Activated B cell treated with CpG ODN at 0.5 μM for 24 hours (primary cell): ENCODE measurements at regions of chr13 and their contacts with region 1.

Region 1: GRCh38 chr13:50801087-50801931 is 42.2 kb downstream of the DLEU7 start:
- DNase-seq: peak; percentile 39
- ATAC-seq: peak; percentile 74
- H3K4me3 Mint-ChIP-seq: peak overlapping the region; percentile 64
- H3K27ac Mint-ChIP-seq: peak overlapping the region; percentile 95
- H3K4me1 Mint-ChIP-seq: peaks cover 40% of the 10 kb centered on the region
- H3K27me3 Mint-ChIP-seq: no peaks in the 10 kb centered on the region
- CTCF ChIP-seq: no peak

Region 2: DNA sequence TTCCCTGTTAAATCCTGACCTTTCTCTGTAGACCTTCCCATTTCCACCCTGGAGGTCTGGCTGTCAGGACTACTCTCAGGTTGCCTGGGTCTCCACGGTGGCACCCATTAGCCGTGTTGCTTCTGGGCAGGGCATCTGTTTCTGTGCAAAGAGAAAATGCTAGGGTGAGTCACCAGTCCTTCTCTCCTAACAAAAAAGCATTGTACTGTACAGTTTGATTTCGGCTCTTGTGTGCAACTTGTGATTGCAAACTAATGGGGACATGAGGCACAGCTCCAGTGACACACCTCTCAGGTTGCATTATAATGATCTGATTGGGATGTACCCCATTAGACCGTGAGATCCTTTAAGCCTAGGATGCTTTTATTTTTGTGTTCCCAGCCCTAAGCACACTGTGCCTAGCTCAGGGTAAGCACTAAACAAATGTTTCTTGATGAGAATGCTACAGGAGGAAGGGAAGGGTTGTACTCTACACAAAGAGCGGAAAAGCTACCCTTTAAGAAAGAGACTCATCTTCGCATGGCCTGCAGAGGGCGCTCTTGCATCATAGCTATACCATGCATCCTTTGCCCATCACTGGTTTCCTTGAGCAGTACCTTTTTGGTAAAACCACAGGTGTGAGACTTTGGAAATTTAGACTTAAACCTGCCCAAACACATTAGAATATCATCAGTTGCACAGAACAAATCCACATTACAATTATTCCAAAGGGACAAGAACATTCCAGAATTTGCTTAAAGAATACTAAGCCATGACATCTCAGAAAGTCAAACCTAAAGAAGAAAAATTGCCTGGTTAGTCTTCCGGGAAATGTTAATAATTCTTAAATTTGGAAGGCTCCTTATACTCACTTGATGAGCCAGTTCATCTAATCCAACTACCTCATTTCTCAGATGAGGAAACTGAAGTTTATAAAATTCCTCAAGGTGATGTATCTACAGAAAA is 824.7 kb before region 1 on chr13:
- CTCF ChIA-PET with region 1: interaction called, 34 read pairs
- POLR2A ChIA-PET with region 1: interaction called, 15 read pairs
- intact Hi-C with region 1: loop called (anchors 1 kb)
- DNase-seq: peak; percentile 57
- ATAC-seq: peak; percentile 86
- H3K4me3 Mint-ChIP-seq: no peak overlapping the region
- H3K27ac Mint-ChIP-seq: no peak overlapping the region
- H3K4me1 Mint-ChIP-seq: peaks cover 2% of the 10 kb centered on the region
- H3K27me3 Mint-ChIP-seq: no peaks in the 10 kb centered on the region
- CTCF ChIP-seq: no peak

Region 3: GRCh38 chr13:50236898-50237318 is 564.4 kb before region 1 on chr13:
- CTCF ChIA-PET with region 1: interaction called, 5 read pairs
- POLR2A ChIA-PET with region 1: interaction called, 13 read pairs
- intact Hi-C with region 1: loop called (anchors 1 kb)
- DNase-seq: no peak
- ATAC-seq: peak; percentile 90
- H3K4me3 Mint-ChIP-seq: peak overlapping the region; percentile 55
- H3K27ac Mint-ChIP-seq: peak overlapping the region; percentile 92
- H3K4me1 Mint-ChIP-seq: peaks cover 53% of the 10 kb centered on the region
- H3K27me3 Mint-ChIP-seq: no peaks in the 10 kb centered on the region
- CTCF ChIP-seq: no peak

Region 4: DNA sequence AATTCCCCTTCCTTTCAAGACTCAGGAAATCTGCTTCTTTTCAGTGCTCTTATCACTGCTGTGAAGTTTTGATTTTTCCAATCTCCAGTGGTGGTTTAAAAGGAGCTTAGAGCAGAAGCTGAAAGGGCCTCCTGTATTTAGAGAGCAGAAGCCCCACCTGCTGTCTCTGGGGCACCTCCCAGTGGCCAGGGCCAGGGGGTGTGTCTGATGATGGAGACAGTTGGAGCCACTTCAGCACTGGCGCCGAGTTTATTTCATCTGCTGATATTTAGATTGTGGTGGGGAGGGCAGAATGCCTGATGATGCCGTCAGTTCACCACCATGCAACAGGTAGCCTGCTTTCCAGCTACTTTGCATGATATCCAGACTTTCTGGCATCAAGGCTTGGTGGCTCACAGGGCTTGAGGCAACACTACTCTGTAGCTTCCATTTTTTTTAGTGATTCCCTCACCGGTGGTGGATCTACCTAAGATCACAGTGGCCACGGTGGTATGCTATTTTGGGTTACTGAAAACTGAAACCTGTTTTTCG is 414.2 kb before region 1 on chr13:
- CTCF ChIA-PET with region 1: interaction called, 12 read pairs
- POLR2A ChIA-PET with region 1: interaction called, 14 read pairs
- intact Hi-C with region 1: loop called (anchors 1 kb)
- DNase-seq: peak; percentile 28
- ATAC-seq: peak; percentile 81
- H3K4me3 Mint-ChIP-seq: no peak overlapping the region
- H3K27ac Mint-ChIP-seq: no peak overlapping the region
- H3K4me1 Mint-ChIP-seq: peaks cover 4% of the 10 kb centered on the region
- H3K27me3 Mint-ChIP-seq: no peaks in the 10 kb centered on the region
- CTCF ChIP-seq: no peak

Region 5: DNA sequence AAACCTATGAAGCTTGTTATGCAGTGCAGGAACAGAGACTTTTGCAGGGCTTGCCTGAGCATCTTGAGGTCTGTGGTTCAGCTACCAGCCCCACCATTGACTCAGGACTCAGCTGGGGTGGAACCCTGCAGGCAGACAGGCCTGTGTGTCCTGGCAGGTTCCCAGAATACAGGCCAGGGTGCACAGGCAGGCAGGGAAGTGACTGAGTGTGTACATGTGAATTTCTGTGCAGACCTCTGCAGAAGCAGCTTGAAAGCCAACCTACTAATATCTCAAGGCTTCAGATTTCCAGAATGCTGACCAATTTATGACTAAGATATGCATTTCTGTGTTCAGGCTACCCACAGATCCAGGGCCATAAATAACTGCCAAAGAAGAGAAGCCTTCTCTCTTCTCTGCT is 212.2 kb before region 1 on chr13:
- CTCF ChIA-PET with region 1: interaction called, 6 read pairs
- POLR2A ChIA-PET with region 1: interaction called, 56 read pairs
- intact Hi-C with region 1: loop called (anchors 1 kb)
- DNase-seq: no peak
- ATAC-seq: no peak
- H3K4me3 Mint-ChIP-seq: no peak overlapping the region
- H3K27ac Mint-ChIP-seq: peak overlapping the region; percentile 46
- H3K4me1 Mint-ChIP-seq: peaks cover 83% of the 10 kb centered on the region
- H3K27me3 Mint-ChIP-seq: no peaks in the 10 kb centered on the region
- CTCF ChIP-seq: no peak

Region 6: DNA sequence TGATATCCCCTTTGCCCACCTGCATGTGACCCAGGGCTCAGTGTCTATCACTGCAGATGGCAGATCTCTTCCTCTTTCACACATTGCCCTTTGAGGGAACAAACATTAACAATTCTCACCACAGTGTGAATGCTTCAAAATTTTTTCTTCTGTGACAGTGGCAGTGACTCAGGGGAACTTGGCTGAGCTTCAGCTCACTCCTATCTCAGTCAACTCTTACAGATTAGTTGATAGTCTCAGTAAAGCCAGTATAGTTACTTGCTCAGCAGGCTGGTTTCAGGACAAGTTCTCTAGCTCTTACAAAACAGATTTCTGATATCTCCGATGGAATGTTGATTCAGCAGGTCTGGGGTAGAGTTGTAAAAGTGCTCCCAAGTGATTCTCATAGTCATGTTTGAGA is 124.7 kb before region 1 on chr13:
- CTCF ChIA-PET with region 1: no interaction called
- POLR2A ChIA-PET with region 1: interaction called, 5 read pairs
- intact Hi-C with region 1: loop called (anchors 5 kb)
- DNase-seq: no peak
- ATAC-seq: peak; percentile 82
- H3K4me3 Mint-ChIP-seq: no peak overlapping the region
- H3K27ac Mint-ChIP-seq: peak overlapping the region; percentile 33
- H3K4me1 Mint-ChIP-seq: peaks cover 18% of the 10 kb centered on the region
- H3K27me3 Mint-ChIP-seq: no peaks in the 10 kb centered on the region
- CTCF ChIP-seq: no peak

Region 7: GRCh38 chr13:51034906-51035305 is 233.6 kb after region 1 on chr13:
- CTCF ChIA-PET with region 1: no interaction called
- POLR2A ChIA-PET with region 1: no interaction called
- intact Hi-C with region 1: no loop called
- DNase-seq: no peak
- ATAC-seq: no peak
- H3K4me3 Mint-ChIP-seq: no peak overlapping the region
- H3K27ac Mint-ChIP-seq: no peak overlapping the region
- H3K4me1 Mint-ChIP-seq: no peaks in the 10 kb centered on the region
- H3K27me3 Mint-ChIP-seq: no peaks in the 10 kb centered on the region
- CTCF ChIP-seq: no peak

Region 8: DNA sequence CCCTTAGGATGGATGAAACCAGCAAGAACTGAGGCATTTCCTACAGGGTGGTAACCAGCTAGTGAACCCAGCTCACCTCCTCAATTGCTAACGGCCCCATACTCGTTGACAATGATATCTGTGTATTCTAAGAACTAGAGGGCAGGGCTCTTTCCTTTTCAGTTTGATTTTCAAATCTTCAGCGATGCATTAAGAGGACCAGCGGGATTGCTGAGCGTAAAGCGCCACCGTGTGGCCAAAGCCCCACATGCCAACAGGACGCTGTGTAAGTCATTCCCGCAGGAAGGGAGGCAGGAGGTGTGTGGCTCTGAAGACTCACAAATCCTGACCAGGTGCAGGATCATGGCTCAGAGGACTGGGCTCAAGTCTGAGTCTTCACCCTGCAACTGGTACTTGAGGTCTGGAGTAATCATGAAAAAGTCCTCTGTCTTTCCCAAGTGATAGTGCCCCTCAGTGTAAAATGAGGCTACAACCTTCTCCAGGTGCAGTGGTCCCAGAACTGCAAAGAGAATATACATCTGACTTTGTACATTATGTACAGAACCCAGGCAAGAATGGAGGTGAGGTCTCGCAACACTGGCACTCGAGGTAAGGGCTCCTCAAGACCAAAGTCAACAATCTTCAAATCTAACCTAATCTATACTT is 268.8 kb after region 1 on chr13:
- CTCF ChIA-PET with region 1: no interaction called
- POLR2A ChIA-PET with region 1: no interaction called
- intact Hi-C with region 1: loop called (anchors 1 kb)
- DNase-seq: peak; percentile 68
- ATAC-seq: peak; percentile 92
- H3K4me3 Mint-ChIP-seq: no peak overlapping the region
- H3K27ac Mint-ChIP-seq: no peak overlapping the region
- H3K4me1 Mint-ChIP-seq: peaks cover 7% of the 10 kb centered on the region
- H3K27me3 Mint-ChIP-seq: peaks cover 28% of the 10 kb centered on the region
- CTCF ChIP-seq: peak; percentile 96

Region 9: DNA sequence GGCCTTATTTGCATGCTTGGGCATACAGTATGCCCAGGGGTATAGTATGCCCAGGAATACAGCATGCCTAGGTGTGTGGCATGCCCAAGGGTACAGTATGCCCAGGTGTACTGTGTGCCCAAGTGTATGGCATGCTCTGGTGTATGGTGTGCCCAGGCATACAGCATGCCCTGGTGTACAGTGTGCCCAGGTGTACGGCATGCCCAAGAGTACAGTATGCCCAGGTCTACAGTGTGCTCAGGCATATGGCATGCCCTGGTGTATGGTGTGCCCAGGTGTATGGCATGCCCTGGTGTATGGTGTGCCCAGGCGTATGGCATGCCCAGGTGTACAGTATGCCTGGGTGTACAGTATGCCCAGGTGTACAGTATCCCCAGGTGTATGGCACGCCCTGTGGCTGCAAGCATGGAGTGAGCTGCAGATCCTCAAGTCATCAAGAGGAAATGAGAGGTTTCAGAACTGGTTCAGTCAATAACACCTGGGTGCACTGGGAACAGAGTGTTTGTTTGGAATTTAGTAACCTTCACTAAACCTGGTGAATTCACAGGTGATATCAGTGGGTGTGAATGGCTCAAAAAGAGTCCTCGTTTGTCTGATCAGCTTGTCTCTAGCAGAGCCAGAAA is 317.6 kb after region 1 on chr13:
- CTCF ChIA-PET with region 1: no interaction called
- POLR2A ChIA-PET with region 1: no interaction called
- intact Hi-C with region 1: no loop called
- DNase-seq: no peak
- ATAC-seq: no peak
- H3K4me3 Mint-ChIP-seq: no peak overlapping the region
- H3K27ac Mint-ChIP-seq: no peak overlapping the region
- H3K4me1 Mint-ChIP-seq: no peaks in the 10 kb centered on the region
- H3K27me3 Mint-ChIP-seq: peaks cover 21% of the 10 kb centered on the region
- CTCF ChIP-seq: no peak